MCF 10A (cell line): ENCODE measurements at regions of chr7 and their contacts with region 1.

Region 1: DNA sequence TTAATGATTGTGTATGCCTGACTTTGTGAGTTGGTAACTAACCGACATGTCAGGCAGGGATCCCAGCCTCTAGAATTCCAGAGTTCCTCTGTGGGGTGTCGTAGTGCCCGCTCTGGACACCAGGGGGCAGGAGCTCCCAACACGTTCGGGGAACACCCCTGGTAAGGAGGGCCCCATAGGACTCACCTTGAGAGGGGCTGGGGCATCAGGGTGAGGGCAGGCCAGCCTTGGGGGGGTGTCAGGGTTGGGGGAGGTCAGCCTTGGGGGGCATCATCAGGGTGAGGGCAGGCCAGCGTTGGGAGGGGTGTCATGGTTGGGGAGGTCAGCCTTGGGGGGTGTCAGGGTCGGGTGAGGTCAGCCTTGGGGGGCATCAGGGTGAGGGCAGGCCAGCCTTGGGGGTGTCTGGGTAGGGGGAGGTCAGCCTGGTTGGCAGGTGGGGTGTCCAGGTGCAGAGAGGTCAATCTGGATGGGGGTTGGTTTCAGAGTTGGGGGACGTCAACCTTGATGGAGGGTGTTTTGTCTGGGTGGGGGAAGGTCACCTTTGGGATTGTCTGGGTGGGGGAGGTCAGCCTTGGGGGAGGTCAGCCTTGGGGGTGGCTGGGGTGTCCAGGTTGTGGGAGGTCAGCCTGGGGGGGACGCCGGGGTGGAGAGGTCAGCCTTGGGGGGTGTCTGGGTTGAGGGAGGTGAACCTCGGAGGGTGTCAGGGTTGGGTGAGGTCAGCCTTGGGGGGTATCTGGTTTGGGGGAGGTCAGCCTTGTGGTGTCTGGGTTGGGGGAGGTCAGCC is 45.6 kb upstream of the SUN1 start:
- DNase-seq: peak; percentile 71
- H3K4me3 Mint-ChIP-seq: no peak overlapping the region
- H3K27ac Mint-ChIP-seq: peak overlapping the region; percentile 23
- H3K4me1 Mint-ChIP-seq: no peaks in the 10 kb centered on the region
- H3K27me3 Mint-ChIP-seq: no peaks in the 10 kb centered on the region
- CTCF ChIP-seq: peak; percentile 83

Region 2: DNA sequence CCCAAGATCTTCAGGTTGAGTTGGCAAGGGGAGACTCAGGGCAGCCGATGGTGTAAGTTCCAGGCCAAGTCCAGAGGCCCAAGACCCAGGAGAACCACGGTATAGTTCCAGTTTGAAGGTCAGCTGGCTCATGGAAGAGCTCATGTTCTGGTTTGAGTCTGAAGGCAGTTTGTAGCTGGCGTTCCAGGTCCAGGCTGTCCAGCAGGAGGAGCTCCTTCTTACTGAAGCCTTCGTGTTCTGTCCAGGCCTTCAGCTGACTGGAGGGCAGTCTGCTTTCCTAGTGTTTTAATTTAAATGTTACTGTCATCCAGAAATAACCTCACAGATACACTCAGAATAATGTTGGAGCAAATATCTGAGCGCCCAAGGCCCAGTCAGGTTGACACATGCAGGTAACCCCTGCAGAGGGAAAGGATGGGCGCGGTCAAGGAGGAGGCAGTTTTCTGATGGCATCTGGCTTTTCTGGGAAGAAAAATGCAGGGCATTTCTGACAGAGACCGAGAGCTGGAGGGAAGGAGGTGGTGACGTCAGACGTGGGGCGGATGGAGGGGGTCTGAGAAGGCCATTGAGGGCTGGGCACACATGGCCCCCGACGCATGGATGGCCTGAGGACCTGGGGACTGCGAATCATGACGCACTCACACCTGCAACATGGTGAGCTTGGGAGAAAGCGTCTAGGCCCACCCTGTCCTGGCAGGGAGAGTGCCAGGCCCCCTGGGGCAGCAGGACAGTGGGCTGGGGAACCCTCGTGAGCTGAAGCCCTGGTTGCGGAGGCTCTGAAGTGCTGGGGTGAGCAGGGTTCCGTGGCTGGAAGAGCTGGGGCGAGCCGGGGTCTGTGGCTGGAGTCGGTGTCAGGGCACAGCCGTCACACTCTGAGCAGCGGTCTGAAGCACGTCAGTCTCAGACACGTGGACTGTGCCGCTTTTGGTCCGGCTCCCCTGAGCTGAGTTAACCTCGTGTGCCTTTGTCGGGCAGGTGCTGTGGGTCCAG is 50.0 kb after region 1 on chr7:
- CTCF ChIA-PET with region 1: interaction called, 4 read pairs
- POLR2A ChIA-PET with region 1: interaction called, 6 read pairs
- intact Hi-C with region 1: loop called (anchors 1 kb)
- DNase-seq: peak; percentile 75
- H3K4me3 Mint-ChIP-seq: peak overlapping the region; percentile 28
- H3K27ac Mint-ChIP-seq: peak overlapping the region; percentile 100
- H3K4me1 Mint-ChIP-seq: peaks cover 31% of the 10 kb centered on the region
- H3K27me3 Mint-ChIP-seq: no peaks in the 10 kb centered on the region
- CTCF ChIP-seq: peak; percentile 46

Region 3: GRCh38 chr7:867672-868486 is 81.2 kb after region 1 on chr7:
- CTCF ChIA-PET with region 1: interaction called, 96 read pairs
- POLR2A ChIA-PET with region 1: interaction called, 15 read pairs
- intact Hi-C with region 1: loop called (anchors 1 kb)
- DNase-seq: peak; percentile 78
- H3K4me3 Mint-ChIP-seq: peak overlapping the region; percentile 22
- H3K27ac Mint-ChIP-seq: peak overlapping the region; percentile 89
- H3K4me1 Mint-ChIP-seq: peaks cover 7% of the 10 kb centered on the region
- H3K27me3 Mint-ChIP-seq: no peaks in the 10 kb centered on the region
- CTCF ChIP-seq: no peak